ENCODE measurements at regions of chr7 and their contacts with region 1.

Region 1: DNA sequence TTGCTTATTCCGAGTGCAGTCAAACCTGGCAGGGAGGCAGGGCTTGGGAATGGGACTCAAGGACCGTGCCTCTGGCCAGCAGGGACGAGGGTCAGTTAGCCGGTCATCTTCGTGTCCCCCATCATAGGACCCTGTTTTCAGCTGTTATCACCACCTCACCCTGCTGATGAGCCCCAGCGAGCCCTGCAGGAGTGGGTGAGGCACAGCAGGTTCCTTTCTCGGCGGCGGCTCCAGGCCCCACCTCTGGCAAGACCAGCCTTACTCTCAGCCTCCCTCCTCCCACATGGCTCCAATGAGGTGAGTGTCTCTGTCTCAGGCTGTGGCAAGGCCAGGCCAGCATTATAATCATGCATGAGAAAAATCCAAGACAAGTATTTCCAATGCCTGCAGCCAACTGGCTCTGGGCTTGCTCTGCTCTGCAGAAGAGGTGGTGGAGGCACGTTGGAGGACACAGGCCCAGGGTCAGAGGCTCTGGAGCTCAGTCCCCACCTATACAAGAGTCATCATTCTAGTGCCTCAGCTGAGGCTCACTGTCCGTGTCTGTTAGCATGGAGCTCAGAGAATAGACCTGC is 15.7 kb downstream of the PKD1L1 start:
- DNase-seq: no peak
- H3K4me3 ChIP-seq: no peak overlapping the region
- H3K27ac ChIP-seq: no peak overlapping the region
- H3K4me1 ChIP-seq: no peaks in the 10 kb centered on the region
- H3K27me3 ChIP-seq: no peaks in the 10 kb centered on the region
- CTCF ChIP-seq: no peak
- EP300 ChIP-seq: no peak
- POLR2A ChIP-seq: no peak

Region 2: GRCh38 chr7:47908720-47909119 is 23.8 kb before region 1 on chr7:
- intact Hi-C with region 1: loop called in 1 of 4 experiments (anchors 1 kb)
- DNase-seq: no peak
- H3K4me3 ChIP-seq: no peak overlapping the region
- H3K27ac ChIP-seq: no peak overlapping the region
- H3K4me1 ChIP-seq: no peaks in the 10 kb centered on the region
- H3K27me3 ChIP-seq: no peaks in the 10 kb centered on the region
- CTCF ChIP-seq: no peak
- EP300 ChIP-seq: no peak
- POLR2A ChIP-seq: no peak